HepG2 (cell line): ENCODE measurements at regions of chr16 and their contacts with region 1.

Region 1: GRCh38 chr16:81451753-81452680 is 7.4 kb downstream of the CMIP start:
- DNase-seq: peak; percentile 99
- ATAC-seq: peak; percentile 72
- H3K4me3 ChIP-seq: peak overlapping the region; percentile 29 to 62 (median 30); a peak in 5 of 6 replicates
- H3K27ac ChIP-seq: peak overlapping the region; percentile 89
- H3K4me1 ChIP-seq: peaks cover 84% of the 10 kb centered on the region
- H3K27me3 ChIP-seq: no peaks in the 10 kb centered on the region; a peak in 1 of 5 replicates
- CTCF ChIP-seq: peak; percentile 63
- EP300 ChIP-seq: peak; percentile 73 to 96; a peak in 3 of 4 replicates
- POLR2A ChIP-seq: peak; percentile 73 to 89; a peak in 3 of 4 replicates
- RAD21 ChIP-seq: peak; percentile 57; the same call in 1 of the 2 replicates

Region 2: GRCh38 chr16:81366316-81366932 is 85.6 kb before region 1 on chr16:
- CTCF ChIA-PET with region 1: no interaction called
- POLR2A ChIA-PET with region 1: no interaction called
- in situ Hi-C with region 1: no loop called
- intact Hi-C with region 1: no loop called
- DNase-seq: peak; percentile 38
- ATAC-seq: peak; percentile 72
- H3K4me3 ChIP-seq: no peak overlapping the region
- H3K27ac ChIP-seq: no peak overlapping the region
- H3K4me1 ChIP-seq: no peaks in the 10 kb centered on the region
- H3K27me3 ChIP-seq: no peaks in the 10 kb centered on the region
- CTCF ChIP-seq: peak; percentile 71
- EP300 ChIP-seq: no peak
- POLR2A ChIP-seq: no peak
- RAD21 ChIP-seq: peak; percentile 67

Region 3: GRCh38 chr16:81429045-81429521 is 22.9 kb before region 1 on chr16:
- CTCF ChIA-PET with region 1: no interaction called
- POLR2A ChIA-PET with region 1: interaction called, 61 read pairs
- in situ Hi-C with region 1: no loop called
- intact Hi-C with region 1: loop called (anchors 1 kb)
- DNase-seq: peak; percentile 76
- ATAC-seq: peak; percentile 77
- H3K4me3 ChIP-seq: peak overlapping the region in 1 of 3 experiments; percentile 51; a peak in 2 of 6 replicates
- H3K27ac ChIP-seq: no peak overlapping the region
- H3K4me1 ChIP-seq: peaks cover 56% of the 10 kb centered on the region
- H3K27me3 ChIP-seq: no peaks in the 10 kb centered on the region
- CTCF ChIP-seq: peak; percentile 72
- EP300 ChIP-seq: no peak
- POLR2A ChIP-seq: no peak
- RAD21 ChIP-seq: peak; percentile 81

Region 4: DNA sequence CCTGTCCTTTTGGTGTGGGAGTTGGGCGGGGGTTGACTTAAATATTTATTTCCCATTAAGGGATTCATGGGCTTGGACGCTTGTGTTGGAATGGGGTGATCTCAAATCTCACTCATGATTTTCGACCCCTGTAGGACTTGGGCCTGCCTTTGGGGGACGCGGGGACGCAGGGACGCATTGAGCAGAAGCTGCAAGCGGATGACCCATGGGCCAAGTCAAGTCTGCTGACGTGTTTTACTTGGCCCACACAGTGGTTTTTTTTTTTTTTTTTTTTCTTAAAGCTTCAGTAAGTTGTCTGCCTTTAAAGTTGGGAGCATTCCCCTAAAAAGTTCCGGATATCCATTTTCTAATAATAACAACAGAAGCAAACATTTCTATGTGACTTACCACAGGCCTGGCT is 21.5 kb after region 1 on chr16:
- CTCF ChIA-PET with region 1: no interaction called
- POLR2A ChIA-PET with region 1: interaction called, 10 read pairs
- in situ Hi-C with region 1: no loop called
- intact Hi-C with region 1: loop called (anchors 1 kb)
- DNase-seq: no peak
- ATAC-seq: no peak
- H3K4me3 ChIP-seq: no peak overlapping the region
- H3K27ac ChIP-seq: no peak overlapping the region
- H3K4me1 ChIP-seq: peaks cover 72% of the 10 kb centered on the region
- H3K27me3 ChIP-seq: no peaks in the 10 kb centered on the region
- CTCF ChIP-seq: no peak
- EP300 ChIP-seq: no peak
- POLR2A ChIP-seq: no peak
- RAD21 ChIP-seq: no peak

Region 5: DNA sequence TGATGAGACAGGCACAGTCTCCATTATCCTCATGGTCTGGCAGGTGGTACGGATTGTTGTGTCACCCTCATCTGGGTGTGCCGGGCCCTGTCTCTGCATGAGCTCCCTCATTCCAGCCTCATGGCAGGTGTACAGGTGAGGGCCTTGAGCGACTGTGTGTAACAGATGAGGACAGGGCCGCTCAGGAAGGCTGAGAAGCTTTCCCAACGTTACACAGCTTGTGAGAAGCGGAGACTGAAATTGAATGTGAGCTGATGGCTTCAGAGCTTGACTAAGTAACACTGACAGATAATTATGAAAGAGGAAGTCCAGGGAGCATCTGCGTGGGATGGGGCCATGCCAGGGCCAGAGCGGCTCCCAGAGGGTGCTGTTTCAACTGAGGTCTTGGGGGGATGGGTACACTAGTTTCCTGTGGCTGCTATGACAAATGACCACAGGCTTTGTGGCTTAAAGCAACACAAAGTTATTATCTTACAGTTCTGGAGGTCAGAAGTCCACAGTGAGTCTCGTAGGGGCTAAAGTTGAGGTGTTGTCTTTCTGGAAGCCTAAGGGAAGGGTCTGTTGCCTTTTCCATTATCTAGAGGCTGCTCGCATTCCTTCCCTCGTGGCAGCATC is 29.3 kb after region 1 on chr16:
- CTCF ChIA-PET with region 1: no interaction called
- POLR2A ChIA-PET with region 1: interaction called, 29 read pairs
- in situ Hi-C with region 1: no loop called
- intact Hi-C with region 1: no loop called
- DNase-seq: peak; percentile 94
- ATAC-seq: peak; percentile 87
- H3K4me3 ChIP-seq: peak overlapping the region in 1 of 3 experiments; percentile 32; a peak in 2 of 6 replicates
- H3K27ac ChIP-seq: peak overlapping the region; percentile 60
- H3K4me1 ChIP-seq: peaks cover 79% of the 10 kb centered on the region
- H3K27me3 ChIP-seq: no peaks in the 10 kb centered on the region
- CTCF ChIP-seq: peak; percentile 55
- EP300 ChIP-seq: peak; percentile 67 to 84
- POLR2A ChIP-seq: peak in 1 of 2 experiments; percentile 25; a peak in 2 of 4 replicates
- RAD21 ChIP-seq: peak; percentile 53; the same call in 1 of the 2 replicates

Region 6: DNA sequence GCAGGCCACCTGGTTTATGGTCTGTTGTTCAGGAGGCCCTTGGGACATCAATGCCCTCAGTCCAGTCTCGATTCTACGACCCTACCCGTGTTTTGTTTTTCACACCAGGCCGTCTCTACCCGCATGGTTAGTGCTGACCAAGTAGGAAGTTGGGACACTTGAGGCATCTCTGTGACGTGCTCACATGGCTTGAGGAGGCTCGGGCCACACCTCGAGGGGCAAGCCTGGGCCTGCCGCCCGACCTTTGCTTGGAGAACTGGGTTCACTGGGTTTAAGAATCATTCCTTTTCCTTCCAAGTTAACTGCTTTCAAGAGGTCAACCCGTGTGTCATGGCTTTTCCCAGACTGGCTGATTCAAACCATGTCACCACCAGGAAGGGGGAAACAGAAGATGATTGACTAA is 79.4 kb after region 1 on chr16:
- CTCF ChIA-PET with region 1: no interaction called
- POLR2A ChIA-PET with region 1: interaction called, 30 read pairs
- in situ Hi-C with region 1: no loop called
- intact Hi-C with region 1: loop called (anchors 2 kb)
- DNase-seq: no peak
- ATAC-seq: no peak
- H3K4me3 ChIP-seq: no peak overlapping the region
- H3K27ac ChIP-seq: peak overlapping the region; percentile 20
- H3K4me1 ChIP-seq: peaks cover 92% of the 10 kb centered on the region
- H3K27me3 ChIP-seq: no peaks in the 10 kb centered on the region
- CTCF ChIP-seq: no peak
- EP300 ChIP-seq: no peak
- POLR2A ChIP-seq: no peak
- RAD21 ChIP-seq: no peak

Region 7: DNA sequence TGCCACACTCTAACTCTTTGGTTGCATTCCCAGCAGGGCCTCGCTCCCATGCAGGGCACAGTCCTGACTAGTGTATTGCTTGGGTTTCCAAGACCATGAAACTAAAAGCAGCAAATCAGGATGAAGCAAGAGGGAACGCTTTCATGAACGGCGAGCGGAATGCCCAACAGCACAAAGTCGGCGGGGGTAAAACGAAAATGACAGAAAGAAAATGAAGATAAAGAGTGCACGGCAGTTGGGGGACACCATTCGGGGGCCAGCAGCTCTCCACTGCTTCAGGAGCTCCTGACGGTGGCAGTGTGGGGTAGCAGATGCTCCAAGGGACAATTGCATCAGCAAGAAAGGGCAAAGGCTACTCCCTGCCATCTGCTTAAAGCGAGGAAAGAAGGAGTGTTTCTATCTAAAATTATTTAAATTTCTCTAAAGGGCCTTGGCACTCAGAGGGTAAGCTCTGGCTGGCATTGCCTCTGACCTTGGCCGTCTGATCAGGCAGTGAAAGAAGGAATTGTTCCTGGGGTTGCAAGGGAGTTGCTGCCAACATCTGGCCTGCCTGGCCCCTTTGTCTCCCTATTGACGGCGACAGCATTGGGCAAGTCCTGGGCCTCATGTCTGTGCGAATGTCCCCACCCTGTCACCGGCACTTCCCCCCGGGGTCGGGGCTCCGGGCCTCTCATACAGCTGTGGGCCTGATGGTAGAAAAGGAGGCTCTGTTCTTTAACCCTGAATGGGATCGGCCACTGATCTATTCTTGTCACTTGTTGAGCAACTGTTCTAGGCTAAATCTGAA is 130.8 kb after region 1 on chr16:
- CTCF ChIA-PET with region 1: no interaction called
- POLR2A ChIA-PET with region 1: interaction called, 3 read pairs
- in situ Hi-C with region 1: no loop called
- intact Hi-C with region 1: loop called (anchors 1 kb)
- DNase-seq: peak; percentile 79
- ATAC-seq: peak; percentile 69
- H3K4me3 ChIP-seq: no peak overlapping the region
- H3K27ac ChIP-seq: peak overlapping the region; percentile 58
- H3K4me1 ChIP-seq: peaks cover 85% of the 10 kb centered on the region
- H3K27me3 ChIP-seq: no peaks in the 10 kb centered on the region
- CTCF ChIP-seq: peak; percentile 82
- EP300 ChIP-seq: peak; percentile 51 to 72; a peak in 2 of 4 replicates
- POLR2A ChIP-seq: 0 out of 4 replicates have a peak, but pooled peaks of 1 of the 2 experiments have one; percentile 21
- RAD21 ChIP-seq: no peak

Region 8: GRCh38 chr16:81650982-81651562 is 199.1 kb after region 1 on chr16:
- CTCF ChIA-PET with region 1: no interaction called
- POLR2A ChIA-PET with region 1: no interaction called
- in situ Hi-C with region 1: no loop called
- intact Hi-C with region 1: no loop called
- DNase-seq: no peak
- ATAC-seq: no peak
- H3K4me3 ChIP-seq: no peak overlapping the region
- H3K27ac ChIP-seq: no peak overlapping the region
- H3K4me1 ChIP-seq: peaks cover 19% of the 10 kb centered on the region
- H3K27me3 ChIP-seq: no peaks in the 10 kb centered on the region
- CTCF ChIP-seq: no peak
- EP300 ChIP-seq: no peak
- POLR2A ChIP-seq: no peak
- RAD21 ChIP-seq: no peak